ENCODE measurements at regions of chr7 and their contacts with region 1.

Region 1: GRCh38 chr7:35565927-35566326 is 129.0 kb downstream of the HERPUD2 start:
- DNase-seq: no peak
- ATAC-seq: no peak
- H3K4me3 ChIP-seq: no peak overlapping the region
- H3K27ac ChIP-seq: no peak overlapping the region
- H3K4me1 ChIP-seq: no peaks in the 10 kb centered on the region
- H3K27me3 ChIP-seq: peaks cover 20% of the 10 kb centered on the region
- CTCF ChIP-seq: no peak
- POLR2A ChIP-seq: no peak
- RAD21 ChIP-seq: no peak

Region 2: GRCh38 chr7:35185907-35186731 is 379.8 kb before region 1 on chr7:
- CTCF ChIA-PET with region 1: no interaction called
- POLR2A ChIA-PET with region 1: no interaction called
- dilution Hi-C with region 1: no loop called
- in situ Hi-C with region 1: no loop called
- intact Hi-C with region 1: no loop called
- DNase-seq: peak; percentile 8
- ATAC-seq: peak; percentile 72
- H3K4me3 ChIP-seq: peak overlapping the region; percentile 42
- H3K27ac ChIP-seq: no peak overlapping the region
- H3K4me1 ChIP-seq: no peaks in the 10 kb centered on the region
- H3K27me3 ChIP-seq: peaks cover 8% of the 10 kb centered on the region; the same call in 1 of the 2 replicates
- CTCF ChIP-seq: no peak
- POLR2A ChIP-seq: no peak
- RAD21 ChIP-seq: no peak

Region 3: GRCh38 chr7:35599645-35600044 is 33.7 kb after region 1 on chr7:
- CTCF ChIA-PET with region 1: no interaction called
- POLR2A ChIA-PET with region 1: no interaction called
- dilution Hi-C with region 1: no loop called
- in situ Hi-C with region 1: no loop called
- intact Hi-C with region 1: loop called (anchors 1 kb)
- DNase-seq: no peak
- ATAC-seq: no peak
- H3K4me3 ChIP-seq: no peak overlapping the region
- H3K27ac ChIP-seq: no peak overlapping the region
- H3K4me1 ChIP-seq: peaks cover 8% of the 10 kb centered on the region
- H3K27me3 ChIP-seq: no peaks in the 10 kb centered on the region
- CTCF ChIP-seq: no peak
- POLR2A ChIP-seq: no peak
- RAD21 ChIP-seq: no peak

Region 4: GRCh38 chr7:35768346-35768745 is 202.4 kb after region 1 on chr7:
- CTCF ChIA-PET with region 1: no interaction called
- POLR2A ChIA-PET with region 1: no interaction called
- dilution Hi-C with region 1: no loop called
- in situ Hi-C with region 1: no loop called
- intact Hi-C with region 1: no loop called
- DNase-seq: no peak
- ATAC-seq: no peak
- H3K4me3 ChIP-seq: no peak overlapping the region
- H3K27ac ChIP-seq: no peak overlapping the region
- H3K4me1 ChIP-seq: no peaks in the 10 kb centered on the region
- H3K27me3 ChIP-seq: no peaks in the 10 kb centered on the region
- CTCF ChIP-seq: no peak
- POLR2A ChIP-seq: no peak
- RAD21 ChIP-seq: no peak

Measured in IMR-90 (cell line).